Calu3 (cell line): ENCODE measurements at regions of chr17 and their contacts with region 1.

Region 1: GRCh38 chr17:40303009-40303657 is 5.8 kb upstream of the RARA start:
- DNase-seq: peak; percentile 94
- H3K4me3 Mint-ChIP-seq: no peak overlapping the region
- H3K27ac Mint-ChIP-seq: peak overlapping the region; percentile 26
- H3K4me1 Mint-ChIP-seq: peaks cover 34% of the 10 kb centered on the region
- H3K27me3 Mint-ChIP-seq: no peaks in the 10 kb centered on the region
- CTCF ChIP-seq: peak; percentile 99

Region 2: GRCh38 chr17:40106760-40107521 is 196.2 kb before region 1 on chr17:
- CTCF ChIA-PET with region 1: no interaction called
- intact Hi-C with region 1: no loop called
- DNase-seq: no peak
- H3K4me3 Mint-ChIP-seq: no peak overlapping the region
- H3K27ac Mint-ChIP-seq: no peak overlapping the region
- H3K4me1 Mint-ChIP-seq: peaks cover 92% of the 10 kb centered on the region
- H3K27me3 Mint-ChIP-seq: no peaks in the 10 kb centered on the region
- CTCF ChIP-seq: no peak

Region 3: GRCh38 chr17:40121181-40122135 is 181.7 kb before region 1 on chr17 and contains the start of gene MSL1:
- CTCF ChIA-PET with region 1: no interaction called
- intact Hi-C with region 1: no loop called
- DNase-seq: peak; percentile 100
- H3K4me3 Mint-ChIP-seq: peak within 1 kb of the TSS; percentile 86
- H3K27ac Mint-ChIP-seq: peak within 1 kb of the TSS; percentile 53
- H3K4me1 Mint-ChIP-seq: peaks cover 48% of the 10 kb centered on the region
- H3K27me3 Mint-ChIP-seq: no peaks in the 10 kb centered on the region
- CTCF ChIP-seq: no peak
- total RNA-seq, gene MSL1: 505 and 524 TPM in 2 replicates

Region 4: GRCh38 chr17:40340880-40341807 is 38.0 kb after region 1 on chr17:
- CTCF ChIA-PET with region 1: interaction called, 1,520 read pairs
- intact Hi-C with region 1: loop called (anchors 2 kb)
- DNase-seq: peak; percentile 100
- H3K4me3 Mint-ChIP-seq: peak overlapping the region; percentile 89
- H3K27ac Mint-ChIP-seq: peak overlapping the region; percentile 75
- H3K4me1 Mint-ChIP-seq: peaks cover 57% of the 10 kb centered on the region
- H3K27me3 Mint-ChIP-seq: no peaks in the 10 kb centered on the region
- CTCF ChIP-seq: peak; percentile 92

Region 5: DNA sequence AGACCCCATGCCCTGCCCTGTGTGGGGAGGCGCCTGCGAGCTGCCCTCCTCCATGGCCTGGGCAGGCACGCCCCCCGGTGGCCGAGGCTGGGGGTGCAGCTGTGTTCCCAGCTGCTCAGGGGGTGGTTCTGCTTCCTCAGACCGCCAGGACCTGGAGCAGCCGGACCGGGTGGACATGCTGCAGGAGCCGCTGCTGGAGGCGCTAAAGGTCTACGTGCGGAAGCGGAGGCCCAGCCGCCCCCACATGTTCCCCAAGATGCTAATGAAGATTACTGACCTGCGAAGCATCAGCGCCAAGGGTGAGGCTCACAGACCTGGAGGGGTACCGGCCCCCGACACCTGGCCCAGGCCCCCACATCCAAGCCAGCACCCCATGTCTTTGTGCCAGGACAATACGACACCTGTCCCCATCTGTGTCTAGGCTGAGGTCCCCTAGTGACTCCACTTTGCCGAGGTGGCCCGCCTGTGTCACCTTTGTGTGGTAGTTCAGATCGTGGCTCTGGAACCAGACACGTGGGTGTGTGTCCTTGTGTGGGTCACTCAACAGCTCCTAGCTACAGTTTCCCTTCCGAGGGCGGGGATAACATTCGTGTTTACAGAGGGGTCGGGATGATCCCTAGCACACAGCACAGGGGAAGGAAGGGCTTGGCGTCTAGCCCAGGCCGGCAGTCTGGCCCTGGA is 52.1 kb after region 1 on chr17:
- CTCF ChIA-PET with region 1: interaction called, 1,520 read pairs
- intact Hi-C with region 1: loop called (anchors 1 kb)
- DNase-seq: peak; percentile 100
- H3K4me3 Mint-ChIP-seq: no peak overlapping the region
- H3K27ac Mint-ChIP-seq: no peak overlapping the region
- H3K4me1 Mint-ChIP-seq: peaks cover 29% of the 10 kb centered on the region
- H3K27me3 Mint-ChIP-seq: no peaks in the 10 kb centered on the region
- CTCF ChIP-seq: no peak

Region 6: DNA sequence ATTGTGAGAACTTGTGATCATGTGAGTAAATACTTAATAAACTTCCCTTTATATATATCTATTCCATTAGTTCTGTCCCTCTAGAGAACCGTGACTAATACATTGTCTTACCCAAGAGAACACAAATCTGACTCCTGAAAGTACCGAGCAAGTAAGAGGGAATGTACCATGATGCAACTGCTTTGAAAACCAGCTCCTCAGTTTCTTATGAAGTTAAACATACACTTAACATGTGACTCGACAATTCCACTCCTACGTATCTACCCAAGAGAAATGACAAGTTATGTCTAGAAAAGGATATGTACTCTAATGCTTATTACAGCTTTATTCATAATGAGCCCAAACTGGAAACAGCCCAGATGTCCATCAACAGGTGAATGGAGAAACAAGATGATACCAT is 70.2 kb after region 1 on chr17:
- CTCF ChIA-PET with region 1: no interaction called
- intact Hi-C with region 1: no loop called
- DNase-seq: no peak
- H3K4me3 Mint-ChIP-seq: no peak overlapping the region
- H3K27ac Mint-ChIP-seq: peak overlapping the region; percentile 14
- H3K4me1 Mint-ChIP-seq: peaks cover 25% of the 10 kb centered on the region
- H3K27me3 Mint-ChIP-seq: no peaks in the 10 kb centered on the region
- CTCF ChIP-seq: no peak